Naive thymus-derived CD4-positive, alpha-beta T cell (primary cell): ENCODE measurements at regions of chr10 and their contacts with region 1.

Region 1: DNA sequence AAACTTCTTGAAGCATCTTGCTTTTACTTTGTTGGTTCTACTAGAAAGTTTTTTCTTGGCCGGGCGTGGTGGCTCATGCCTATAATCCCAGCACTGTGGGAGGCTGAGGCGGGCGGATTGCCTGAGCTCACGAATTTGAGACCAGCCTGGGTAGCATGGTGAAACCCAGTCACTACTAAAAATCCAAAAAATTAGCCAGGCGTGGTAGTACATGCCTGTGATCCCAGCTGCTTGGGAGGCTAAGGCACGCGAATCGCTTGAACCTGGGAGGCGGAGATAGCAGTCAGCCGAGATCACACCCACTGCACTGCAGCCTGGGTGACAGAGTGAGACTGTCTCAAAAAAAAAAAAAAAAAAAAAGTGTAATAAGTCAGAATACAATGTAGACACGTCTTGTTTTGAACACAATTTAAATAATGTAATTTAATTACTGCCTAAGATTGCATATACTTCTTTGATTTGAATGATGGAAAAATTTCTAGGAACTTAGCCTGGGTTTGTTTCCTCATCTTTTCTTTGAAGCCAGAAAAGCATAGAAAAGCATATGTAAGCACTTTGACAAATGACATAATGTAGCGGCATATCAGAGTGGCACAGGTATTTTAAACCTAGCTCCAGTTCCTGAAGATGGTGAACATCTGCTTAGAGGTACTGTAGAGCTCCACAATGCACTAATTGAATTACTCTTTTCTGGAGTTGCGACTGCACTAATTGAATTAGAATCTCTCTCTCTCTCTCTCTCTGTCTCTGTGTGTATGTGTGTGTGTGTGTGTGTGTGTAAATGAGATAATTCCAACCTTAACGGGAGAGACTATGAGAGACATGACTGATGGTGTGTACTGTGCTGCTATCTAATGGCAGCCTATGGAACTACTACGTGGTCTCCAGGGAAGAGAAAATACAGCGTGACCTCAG is 87.8 kb downstream of the BTRC start:
- DNase-seq: peak in 6 of 9 donors; percentile 19 to 41 (median 34)
- ATAC-seq: peak; percentile 87
- H3K4me3 ChIP-seq: no peak overlapping the region
- H3K4me3 Mint-ChIP-seq: no peak overlapping the region
- H3K27ac ChIP-seq: no peak overlapping the region
- H3K27ac Mint-ChIP-seq: peak overlapping the region in 4 of 9 donors; percentile 5 to 43 (median 20)
- H3K4me1 ChIP-seq: no peaks in the 10 kb centered on the region
- H3K4me1 Mint-ChIP-seq: peaks cover 2 to 7% (median 5%) of the 10 kb centered on the region in 7 donors
- H3K27me3 ChIP-seq: no peaks in the 10 kb centered on the region
- H3K27me3 Mint-ChIP-seq: peaks cover 0 to 3% (median 0%) of the 10 kb centered on the region in 5 donors

Region 2: DNA sequence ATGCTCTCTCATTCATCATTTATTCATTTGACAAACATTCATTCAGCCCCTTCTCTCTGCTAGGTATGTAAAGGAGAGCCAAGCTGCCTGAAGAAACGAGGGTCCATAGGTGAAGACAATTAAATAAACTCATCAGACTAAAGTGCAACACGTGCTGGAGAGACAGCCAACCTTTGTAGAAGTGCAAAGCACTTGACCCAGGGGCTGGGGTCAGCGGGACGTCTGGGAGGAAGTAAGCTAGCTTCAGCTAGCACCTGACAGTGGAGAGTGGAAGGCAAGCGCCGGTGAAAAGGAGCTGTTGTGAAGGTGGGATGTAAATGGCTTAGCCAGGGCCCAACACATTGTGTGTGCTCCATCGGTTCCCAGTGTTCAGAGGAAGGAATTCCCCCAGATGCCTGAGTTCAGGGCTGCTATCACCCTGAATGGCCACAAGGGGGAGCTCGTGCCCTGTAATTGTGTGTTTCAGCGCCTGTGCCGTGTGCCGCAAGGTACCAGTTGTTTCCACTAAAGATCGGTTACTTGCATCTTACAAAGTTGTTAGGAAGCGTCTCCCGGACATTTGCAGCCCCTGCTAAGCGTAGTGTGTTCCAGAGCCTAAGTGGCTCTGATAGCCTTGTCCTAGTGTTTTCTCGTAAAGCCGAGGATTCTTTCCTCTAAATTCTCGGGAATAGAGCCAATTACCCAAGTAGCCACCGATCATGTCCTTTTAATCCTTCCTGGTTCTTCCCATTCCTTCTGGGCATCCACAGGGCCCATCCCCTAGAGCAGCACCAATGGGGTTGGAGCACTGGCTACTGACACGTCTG is 280.1 kb before region 1 on chr10:
- CTCF ChIA-PET with region 1: no interaction called
- POLR2A ChIA-PET with region 1: no interaction called
- intact Hi-C with region 1: loop called in 1 of 2 experiments (anchors 1 kb)
- DNase-seq: peak; percentile 45 to 71 (median 65)
- ATAC-seq: peak; percentile 96
- H3K4me3 ChIP-seq: no peak overlapping the region
- H3K4me3 Mint-ChIP-seq: peak overlapping the region in 5 of 10 donors; percentile 20 to 51 (median 30)
- H3K27ac ChIP-seq: no peak overlapping the region
- H3K27ac Mint-ChIP-seq: peak overlapping the region in 1 of 9 donors; percentile 26
- H3K4me1 ChIP-seq: no peaks in the 10 kb centered on the region
- H3K4me1 Mint-ChIP-seq: peaks cover 9 to 16% (median 12%) of the 10 kb centered on the region in 7 donors
- H3K27me3 ChIP-seq: peaks cover 6 to 15% of the 10 kb centered on the region in 2 donors
- H3K27me3 Mint-ChIP-seq: peaks cover 49 to 78% (median 70%) of the 10 kb centered on the region in 5 donors

Region 3: DNA sequence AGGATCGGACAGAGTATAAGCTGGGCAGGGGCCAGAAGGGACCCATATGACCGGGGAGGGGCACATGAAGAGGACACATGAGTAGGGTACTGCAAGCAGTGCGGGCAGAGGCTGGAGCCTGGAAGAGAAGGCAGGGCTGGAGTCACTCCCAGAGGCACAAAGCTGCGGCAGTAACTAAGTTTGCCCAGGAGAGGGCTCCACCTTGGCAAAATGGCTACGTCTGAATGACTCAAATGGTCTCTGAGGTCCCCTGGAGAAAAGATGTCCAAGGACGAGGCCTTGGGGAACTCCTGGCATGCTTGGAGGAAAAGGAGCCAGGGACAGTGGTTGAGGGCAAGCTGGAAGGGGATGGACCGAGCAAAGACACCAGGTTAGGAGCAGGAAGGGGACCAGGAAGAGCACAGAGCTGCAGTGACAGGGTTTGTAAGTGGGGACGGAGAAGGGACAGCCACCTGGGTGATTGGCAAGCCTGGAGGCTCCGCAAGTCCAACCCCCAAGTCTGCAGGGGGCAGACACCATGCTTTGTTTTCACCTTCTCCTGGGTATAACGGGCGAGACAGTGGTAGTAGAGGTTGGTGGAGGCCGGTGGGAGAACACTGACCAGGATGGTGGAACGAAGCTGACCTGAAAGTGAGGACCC is 169.4 kb before region 1 on chr10:
- CTCF ChIA-PET with region 1: interaction called, 5 read pairs
- POLR2A ChIA-PET with region 1: no interaction called
- intact Hi-C with region 1: loop called in 1 of 2 experiments (anchors 1 kb)
- DNase-seq: peak in 8 of 9 donors; percentile 18 to 57 (median 44)
- ATAC-seq: peak; percentile 81
- H3K4me3 ChIP-seq: no peak overlapping the region
- H3K4me3 Mint-ChIP-seq: no peak overlapping the region
- H3K27ac ChIP-seq: no peak overlapping the region
- H3K27ac Mint-ChIP-seq: no peak overlapping the region
- H3K4me1 ChIP-seq: no peaks in the 10 kb centered on the region
- H3K4me1 Mint-ChIP-seq: peaks cover 0 to 8% (median 2%) of the 10 kb centered on the region in 7 donors
- H3K27me3 ChIP-seq: no peaks in the 10 kb centered on the region
- H3K27me3 Mint-ChIP-seq: peaks cover 20 to 39% (median 32%) of the 10 kb centered on the region in 5 donors

Region 4: DNA sequence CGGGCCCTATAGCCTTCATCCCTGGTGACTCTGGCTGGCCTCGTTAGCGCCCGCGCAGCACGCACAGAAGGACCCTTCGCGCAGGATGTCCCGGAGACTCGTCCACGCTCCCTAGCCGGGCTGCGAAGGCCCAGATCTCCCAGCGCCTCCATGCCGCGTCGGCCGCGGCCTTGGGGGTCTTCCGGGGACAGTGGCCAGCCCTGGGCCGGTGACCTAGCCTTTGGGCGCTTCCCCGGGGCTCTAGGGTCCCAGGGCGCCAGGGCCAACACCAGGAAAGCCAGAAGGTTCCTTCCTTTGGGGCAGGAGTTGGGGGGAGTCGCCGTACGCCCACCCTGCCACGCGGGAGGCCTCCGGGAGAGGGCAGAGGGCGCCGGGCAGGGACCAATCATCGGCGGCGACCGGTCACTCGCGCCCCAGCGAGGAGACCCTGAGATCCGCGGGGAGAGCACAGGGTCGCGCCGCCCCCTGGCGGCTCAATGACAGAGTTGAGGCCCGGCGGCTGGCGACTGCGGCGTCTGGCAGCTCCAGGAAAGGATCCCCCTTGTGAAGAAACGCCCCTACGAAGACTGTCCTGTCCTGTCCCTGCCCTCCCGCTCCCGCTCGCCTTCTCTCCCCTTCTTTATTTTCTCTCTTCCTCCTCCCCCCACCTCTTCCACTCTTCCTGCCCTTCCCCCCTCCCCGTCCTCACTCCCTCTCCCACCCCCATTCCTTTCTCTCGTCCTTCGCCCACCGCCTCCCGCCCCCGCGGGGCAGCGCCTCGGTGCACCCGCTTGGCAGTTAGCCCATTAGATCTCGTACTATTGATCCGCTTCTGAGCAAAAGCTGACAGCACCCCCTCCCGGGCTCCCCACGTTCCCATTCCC is 150.2 kb before region 1 on chr10:
- CTCF ChIA-PET with region 1: no interaction called
- POLR2A ChIA-PET with region 1: no interaction called
- intact Hi-C with region 1: loop called in 1 of 2 experiments (anchors 5 kb)
- DNase-seq: peak in 5 of 9 donors; percentile 22 to 29 (median 25)
- ATAC-seq: peak; percentile 60
- H3K4me3 ChIP-seq: peak overlapping the region; percentile 41
- H3K4me3 Mint-ChIP-seq: peak overlapping the region; percentile 73 to 92 (median 84)
- H3K27ac ChIP-seq: no peak overlapping the region
- H3K27ac Mint-ChIP-seq: no peak overlapping the region
- H3K4me1 ChIP-seq: peaks cover 0 to 10% of the 10 kb centered on the region in 2 donors
- H3K4me1 Mint-ChIP-seq: peaks cover 0 to 12% (median 7%) of the 10 kb centered on the region in 7 donors
- H3K27me3 ChIP-seq: peaks cover 11 to 15% of the 10 kb centered on the region in 2 donors
- H3K27me3 Mint-ChIP-seq: peaks cover 69 to 87% (median 79%) of the 10 kb centered on the region in 5 donors

Region 5: DNA sequence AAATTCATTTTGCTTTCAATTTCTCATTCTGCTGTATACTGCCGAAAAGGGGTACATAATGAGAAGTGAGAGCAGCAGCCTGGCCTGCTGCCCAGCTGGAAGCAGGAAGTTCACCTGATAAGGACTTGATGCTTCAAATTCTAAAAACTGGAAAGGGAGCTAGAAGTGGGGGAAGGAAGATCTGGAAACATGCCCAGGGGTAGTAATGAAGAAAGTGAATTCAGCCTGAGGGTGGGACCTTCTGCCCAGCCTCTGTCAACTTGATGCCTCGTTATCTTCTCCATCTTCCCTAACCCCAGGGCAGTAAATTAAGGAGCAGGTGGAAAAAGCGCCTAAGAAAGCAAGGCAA is 544.8 kb after region 1 on chr10:
- CTCF ChIA-PET with region 1: no interaction called
- POLR2A ChIA-PET with region 1: no interaction called
- intact Hi-C with region 1: no loop called
- DNase-seq: no peak
- ATAC-seq: no peak
- H3K4me3 ChIP-seq: no peak overlapping the region
- H3K4me3 Mint-ChIP-seq: no peak overlapping the region
- H3K27ac ChIP-seq: no peak overlapping the region
- H3K27ac Mint-ChIP-seq: peak overlapping the region in 5 of 9 donors; percentile 0 to 79 (median 41)
- H3K4me1 ChIP-seq: no peaks in the 10 kb centered on the region
- H3K4me1 Mint-ChIP-seq: peaks cover 0 to 11% (median 4%) of the 10 kb centered on the region in 7 donors
- H3K27me3 ChIP-seq: no peaks in the 10 kb centered on the region
- H3K27me3 Mint-ChIP-seq: no peaks in the 10 kb centered on the region